Panc1 (cell line): ENCODE measurements at regions of chr2 and their contacts with region 1.

Region 1: DNA sequence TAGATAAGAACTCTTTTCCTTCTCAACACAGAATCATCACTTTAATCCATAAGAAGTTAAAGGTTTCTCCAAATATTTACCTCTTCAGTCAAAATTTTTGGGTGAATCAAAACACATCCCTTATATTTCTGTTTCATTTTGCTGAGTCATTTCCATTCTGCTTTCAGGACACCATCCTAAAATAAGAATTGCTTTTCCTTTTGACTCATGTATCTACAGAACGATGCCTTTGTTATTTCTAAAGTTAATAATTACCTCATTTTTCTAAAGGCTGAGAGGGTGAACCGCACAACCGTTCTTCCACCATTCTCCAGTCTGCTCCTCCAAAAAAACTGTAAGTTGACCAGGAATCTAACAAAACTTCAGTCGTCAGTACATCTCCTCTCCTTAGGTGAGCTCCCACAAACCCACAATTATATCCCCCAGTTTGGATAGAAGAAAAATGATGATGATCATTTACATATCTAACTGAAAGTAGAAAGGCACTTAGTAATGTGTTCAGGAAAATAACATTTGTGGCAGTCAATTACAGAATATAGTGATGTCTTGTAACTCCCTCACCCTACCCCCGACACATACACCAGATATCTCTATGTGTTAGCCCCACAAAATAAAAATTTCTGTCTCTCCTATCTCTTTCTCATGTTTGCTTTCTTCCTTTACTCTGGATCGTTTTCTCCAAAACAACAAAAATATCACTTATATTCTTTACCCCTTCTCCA is 162.5 kb downstream of the RAD51AP2 start:
- DNase-seq: no peak
- ATAC-seq: no peak
- H3K4me3 ChIP-seq: no peak overlapping the region
- H3K27ac ChIP-seq: no peak overlapping the region
- H3K4me1 ChIP-seq: no peaks in the 10 kb centered on the region
- H3K27me3 ChIP-seq: no peaks in the 10 kb centered on the region
- CTCF ChIP-seq: no peak

Region 2: GRCh38 chr2:17495590-17495989 is 139.8 kb after region 1 on chr2:
- CTCF ChIA-PET with region 1: no interaction called
- POLR2A ChIA-PET with region 1: no interaction called
- in situ Hi-C with region 1: no loop called
- intact Hi-C with region 1: no loop called
- DNase-seq: no peak
- ATAC-seq: no peak
- H3K4me3 ChIP-seq: no peak overlapping the region
- H3K27ac ChIP-seq: no peak overlapping the region
- H3K4me1 ChIP-seq: no peaks in the 10 kb centered on the region
- H3K27me3 ChIP-seq: no peaks in the 10 kb centered on the region
- CTCF ChIP-seq: no peak

Region 3: GRCh38 chr2:17529771-17530170 is 174.0 kb after region 1 on chr2:
- CTCF ChIA-PET with region 1: no interaction called
- POLR2A ChIA-PET with region 1: interaction called, 10 read pairs
- in situ Hi-C with region 1: no loop called
- intact Hi-C with region 1: no loop called
- DNase-seq: no peak
- ATAC-seq: no peak
- H3K4me3 ChIP-seq: no peak overlapping the region
- H3K27ac ChIP-seq: no peak overlapping the region
- H3K4me1 ChIP-seq: no peaks in the 10 kb centered on the region
- H3K27me3 ChIP-seq: peaks cover 10% of the 10 kb centered on the region; the same call in 1 of the 2 replicates
- CTCF ChIP-seq: no peak